ENCODE measurements at regions of chr5 and their contacts with region 1.

Region 1: DNA sequence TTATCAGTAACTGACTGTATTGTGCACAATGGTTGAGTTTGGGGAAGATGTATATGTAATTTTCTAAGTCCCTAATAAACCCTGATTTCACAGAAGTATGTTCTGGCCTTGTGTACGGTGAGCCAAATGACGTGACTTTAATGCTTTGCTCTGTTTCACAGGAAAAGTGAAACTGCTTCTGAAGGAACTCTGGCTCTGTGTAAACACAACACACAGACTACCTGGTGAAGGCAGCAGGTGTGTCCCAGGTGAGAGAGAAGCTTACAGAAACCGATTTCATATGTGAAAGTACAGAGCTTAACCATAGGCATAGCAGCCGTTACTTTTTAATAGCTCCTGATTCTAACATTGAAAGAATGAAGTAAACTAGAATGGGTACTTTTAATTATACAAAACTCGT is 31.9 kb downstream of the ICE1 start:
- DNase-seq: no peak
- H3K4me3 ChIP-seq: no peak overlapping the region
- H3K27ac ChIP-seq: no peak overlapping the region
- H3K4me1 ChIP-seq: no peaks in the 10 kb centered on the region
- H3K27me3 ChIP-seq: no peaks in the 10 kb centered on the region
- CTCF ChIP-seq: no peak

Region 2: DNA sequence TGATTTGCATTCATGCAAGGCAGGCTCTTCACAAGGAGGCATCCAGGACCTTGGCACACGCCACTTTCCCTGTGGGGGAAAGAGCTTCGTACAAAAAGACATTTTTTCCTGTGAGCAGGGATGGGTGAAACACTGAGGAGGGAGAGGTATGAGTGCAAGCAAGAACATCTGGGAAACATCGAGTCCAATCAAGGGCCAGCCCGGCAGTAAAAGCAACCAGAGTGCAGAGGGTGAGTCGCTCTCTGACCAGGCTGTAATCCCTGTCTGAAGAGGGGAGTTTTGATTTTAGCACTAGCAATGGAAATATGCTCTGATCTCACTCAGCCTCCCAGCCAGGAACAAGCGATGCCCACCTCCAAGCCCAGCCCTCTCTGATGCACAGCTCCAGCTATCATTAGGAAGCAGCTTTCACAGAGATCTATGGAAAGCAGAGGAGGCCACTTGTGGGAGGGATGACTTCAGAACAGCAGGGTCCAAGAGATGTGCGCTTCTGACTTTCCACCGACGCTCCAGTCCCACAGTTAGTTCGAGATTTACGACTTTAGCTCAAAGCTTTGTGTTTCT is 525.2 kb before region 1 on chr5:
- CTCF ChIA-PET with region 1: no interaction called
- POLR2A ChIA-PET with region 1: no interaction called
- intact Hi-C with region 1: no loop called
- DNase-seq: no peak
- H3K4me3 ChIP-seq: no peak overlapping the region
- H3K27ac ChIP-seq: no peak overlapping the region
- H3K4me1 ChIP-seq: no peaks in the 10 kb centered on the region
- H3K27me3 ChIP-seq: peaks cover 32% of the 10 kb centered on the region
- CTCF ChIP-seq: no peak

Region 3: DNA sequence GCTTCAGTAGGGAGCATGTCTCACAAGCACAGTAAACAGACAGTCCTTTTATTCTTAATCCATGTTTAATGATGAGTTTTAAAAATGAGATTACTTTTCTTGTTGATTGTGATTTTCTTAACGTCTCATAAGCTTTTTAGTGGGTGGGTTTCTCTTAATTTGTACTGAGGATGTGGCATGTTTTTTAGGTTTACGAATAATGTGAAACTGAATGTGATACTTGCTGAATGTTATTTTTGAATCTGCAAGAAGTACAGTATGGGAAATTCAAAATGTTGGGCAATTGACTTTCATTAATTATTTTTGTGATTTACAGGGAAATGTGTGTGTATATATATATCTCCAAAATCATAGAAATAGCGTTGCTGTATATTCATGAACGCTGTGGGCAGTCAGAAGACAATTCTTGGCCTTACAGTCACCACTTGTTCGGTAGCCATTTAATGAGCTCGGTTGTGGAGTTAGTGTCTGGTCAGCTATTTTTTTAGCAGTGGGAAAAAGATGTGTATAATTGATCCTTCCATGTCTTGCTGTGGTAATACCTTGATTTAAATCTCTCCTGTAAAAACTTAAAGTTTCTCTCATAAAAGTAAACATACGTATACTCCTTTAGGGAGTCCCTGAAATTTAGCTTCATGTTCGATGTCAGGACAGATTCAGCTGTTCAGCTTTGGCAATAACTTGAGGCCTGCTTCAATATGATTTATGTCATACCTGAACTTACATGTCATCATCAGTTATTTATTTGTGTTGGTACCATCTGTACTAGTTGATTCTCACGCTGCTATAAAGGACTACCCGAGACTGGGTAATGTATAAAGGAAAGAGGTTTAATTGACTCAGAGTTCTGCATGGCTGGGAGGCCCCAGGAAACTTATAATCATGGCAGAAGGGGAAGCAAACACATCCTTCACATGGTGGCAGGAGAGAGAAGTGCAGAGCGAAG is 16.9 kb before region 1 on chr5:
- CTCF ChIA-PET with region 1: interaction called, 13 read pairs
- POLR2A ChIA-PET with region 1: no interaction called
- intact Hi-C with region 1: no loop called
- DNase-seq: no peak
- H3K4me3 ChIP-seq: no peak overlapping the region
- H3K27ac ChIP-seq: no peak overlapping the region
- H3K4me1 ChIP-seq: no peaks in the 10 kb centered on the region
- H3K27me3 ChIP-seq: no peaks in the 10 kb centered on the region
- CTCF ChIP-seq: no peak

Region 4: DNA sequence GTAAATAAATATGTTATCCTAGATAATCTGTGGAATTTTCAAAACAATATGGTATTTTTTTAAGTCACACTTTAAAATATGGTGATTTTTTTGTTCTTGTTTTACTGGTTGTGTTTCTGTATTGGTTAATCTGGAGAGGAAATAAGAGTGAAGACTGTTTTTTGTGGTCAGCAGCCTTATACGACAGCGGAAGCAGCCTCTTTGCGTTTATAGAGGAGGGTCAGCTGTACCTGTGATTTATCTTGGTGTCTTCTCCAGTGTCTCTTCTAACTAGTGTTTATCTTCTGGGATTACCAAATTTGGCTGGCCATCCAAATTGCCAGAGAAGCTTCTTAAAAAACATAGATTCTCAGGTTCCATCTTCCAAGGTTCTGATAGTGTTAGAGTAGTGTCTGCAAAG is 26.8 kb after region 1 on chr5:
- CTCF ChIA-PET with region 1: no interaction called
- POLR2A ChIA-PET with region 1: no interaction called
- intact Hi-C with region 1: no loop called
- DNase-seq: no peak
- H3K4me3 ChIP-seq: no peak overlapping the region
- H3K27ac ChIP-seq: no peak overlapping the region
- H3K4me1 ChIP-seq: no peaks in the 10 kb centered on the region
- H3K27me3 ChIP-seq: no peaks in the 10 kb centered on the region
- CTCF ChIP-seq: no peak

Region 5: DNA sequence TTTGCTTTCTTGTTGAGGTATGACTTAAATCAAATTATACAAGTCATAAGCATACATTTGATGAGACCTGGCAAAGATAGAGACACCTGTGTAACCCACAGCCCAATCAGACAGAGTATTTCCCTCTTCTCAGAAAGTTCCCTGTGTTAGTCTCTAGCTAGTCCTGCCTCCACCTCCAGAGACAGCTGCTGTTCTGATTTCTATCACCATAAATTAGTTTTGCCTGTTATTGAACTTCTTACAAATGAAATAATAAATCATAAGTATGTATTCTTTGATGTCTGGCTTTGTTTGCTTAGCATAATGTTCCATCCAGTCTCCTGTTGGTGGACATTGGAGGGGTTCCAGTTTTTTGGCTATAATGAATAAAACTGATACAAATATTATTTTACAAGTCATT is 162.6 kb after region 1 on chr5:
- CTCF ChIA-PET with region 1: no interaction called
- POLR2A ChIA-PET with region 1: interaction called, 14 read pairs
- intact Hi-C with region 1: no loop called
- DNase-seq: no peak
- H3K4me3 ChIP-seq: no peak overlapping the region
- H3K27ac ChIP-seq: no peak overlapping the region
- H3K4me1 ChIP-seq: no peaks in the 10 kb centered on the region
- H3K27me3 ChIP-seq: peaks cover 33% of the 10 kb centered on the region
- CTCF ChIP-seq: no peak